ENCODE measurements at regions of chr3 and their contacts with region 1.

Region 1: DNA sequence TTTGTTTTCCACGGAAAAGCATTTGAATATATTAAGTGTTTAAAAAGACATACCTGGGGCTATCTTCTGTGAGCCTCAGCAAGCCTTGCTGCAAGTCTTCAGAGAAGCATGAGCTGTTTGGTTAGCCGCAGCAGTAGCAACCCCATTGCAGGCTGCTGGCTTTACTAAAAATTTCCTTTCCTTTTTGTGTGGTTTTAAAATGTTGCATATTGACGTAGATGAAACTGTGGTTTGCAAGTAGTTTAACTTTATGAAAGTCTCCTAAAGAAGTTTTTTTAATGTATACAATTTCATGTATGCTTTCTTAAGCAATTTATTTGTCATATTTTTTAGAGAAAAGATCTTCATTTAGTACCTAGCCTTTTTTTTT is at the start of gene GPR171:
- DNase-seq: peak; percentile 70
- H3K4me3 Mint-ChIP-seq: peak within 1 kb of the TSS; percentile 91
- H3K27ac Mint-ChIP-seq: peak within 1 kb of the TSS; percentile 95
- H3K4me1 Mint-ChIP-seq: peaks cover 52% of the 10 kb centered on the region
- H3K27me3 Mint-ChIP-seq: no peaks in the 10 kb centered on the region
- total RNA-seq, gene GPR171: 232 TPM in 2 replicates

Region 2: DNA sequence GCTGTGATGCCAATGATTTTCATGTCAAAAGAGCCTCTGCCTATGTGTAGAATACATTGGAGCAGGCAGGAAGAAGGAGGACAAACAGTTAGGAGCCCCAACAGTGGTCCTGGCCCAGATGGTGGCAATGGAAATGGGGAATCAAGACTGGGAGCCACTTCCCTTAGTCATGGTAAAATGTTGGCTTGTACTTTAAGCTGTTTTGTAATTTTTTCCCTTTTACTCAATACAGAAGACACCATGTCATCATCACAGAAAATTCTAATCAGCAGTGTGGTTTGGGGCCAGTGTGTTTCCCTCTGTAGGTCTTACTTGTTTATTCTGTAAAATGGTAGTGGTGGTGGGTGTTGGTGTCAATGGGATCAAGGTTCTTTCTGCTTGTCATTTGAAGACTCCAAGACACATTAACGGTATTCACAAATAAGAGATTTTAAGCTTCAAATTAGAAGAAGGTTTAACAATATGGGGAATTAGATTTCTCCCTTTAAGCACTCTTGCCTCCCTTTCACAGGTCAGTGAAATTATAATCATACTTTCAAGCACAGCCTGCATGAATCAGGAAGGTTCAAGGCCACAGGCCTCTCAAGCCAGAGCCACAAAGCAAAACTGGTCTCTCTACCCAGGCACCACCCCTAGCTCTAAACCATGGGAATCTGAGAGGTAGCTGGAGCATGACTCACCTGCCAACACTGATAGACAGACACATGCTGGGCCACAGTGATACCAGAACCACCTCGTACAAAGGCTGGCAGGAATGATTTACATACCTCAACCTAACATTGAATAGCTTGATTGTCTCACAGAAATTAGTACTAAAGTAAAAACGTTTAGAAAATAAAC is 464.9 kb before region 1 on chr3:
- intact Hi-C with region 1: loop called (anchors 2 kb)
- DNase-seq: no peak
- H3K4me3 Mint-ChIP-seq: peak overlapping the region; percentile 53
- H3K27ac Mint-ChIP-seq: peak overlapping the region; percentile 100
- H3K4me1 Mint-ChIP-seq: peaks cover 91% of the 10 kb centered on the region
- H3K27me3 Mint-ChIP-seq: no peaks in the 10 kb centered on the region

Region 3: GRCh38 chr3:151168269-151169094 is 34.6 kb before region 1 on chr3:
- intact Hi-C with region 1: loop called (anchors 1 kb)
- DNase-seq: peak; percentile 61
- H3K4me3 Mint-ChIP-seq: no peak overlapping the region
- H3K27ac Mint-ChIP-seq: no peak overlapping the region
- H3K4me1 Mint-ChIP-seq: peaks cover 43% of the 10 kb centered on the region
- H3K27me3 Mint-ChIP-seq: no peaks in the 10 kb centered on the region

Region 4: GRCh38 chr3:151183265-151183671 is 19.8 kb before region 1 on chr3:
- intact Hi-C with region 1: no loop called
- DNase-seq: no peak
- H3K4me3 Mint-ChIP-seq: peak overlapping the region; percentile 57
- H3K27ac Mint-ChIP-seq: peak overlapping the region; percentile 73
- H3K4me1 Mint-ChIP-seq: peaks cover 41% of the 10 kb centered on the region
- H3K27me3 Mint-ChIP-seq: no peaks in the 10 kb centered on the region

Region 5: DNA sequence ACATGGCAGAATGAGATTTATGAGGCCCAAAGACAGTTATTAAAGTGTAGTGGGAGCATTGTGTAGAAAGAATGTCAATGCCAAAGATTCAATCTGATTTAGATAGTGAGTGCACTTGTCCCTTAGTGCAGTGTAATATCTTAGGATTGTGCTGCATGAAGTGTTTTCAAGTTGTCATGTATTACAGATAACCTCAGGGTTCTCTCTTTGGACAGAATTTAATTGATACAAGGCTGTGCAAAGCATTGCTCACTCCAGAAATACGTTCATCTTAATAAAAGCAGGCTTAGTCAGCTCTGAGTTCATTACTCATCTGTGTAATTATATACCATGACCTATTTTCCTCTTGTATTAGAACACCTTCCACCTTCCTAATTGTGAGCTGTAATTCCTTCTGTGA is 16.0 kb after region 1 on chr3:
- intact Hi-C with region 1: loop called (anchors 1 kb)
- DNase-seq: no peak
- H3K4me3 Mint-ChIP-seq: no peak overlapping the region
- H3K27ac Mint-ChIP-seq: no peak overlapping the region
- H3K4me1 Mint-ChIP-seq: peaks cover 14% of the 10 kb centered on the region
- H3K27me3 Mint-ChIP-seq: no peaks in the 10 kb centered on the region

Region 6: GRCh38 chr3:151282921-151283320 is 79.9 kb after region 1 on chr3:
- intact Hi-C with region 1: loop called (anchors 1 kb)
- DNase-seq: no peak
- H3K4me3 Mint-ChIP-seq: no peak overlapping the region
- H3K27ac Mint-ChIP-seq: peak overlapping the region; percentile 19
- H3K4me1 Mint-ChIP-seq: peaks cover 47% of the 10 kb centered on the region
- H3K27me3 Mint-ChIP-seq: no peaks in the 10 kb centered on the region

Region 7: GRCh38 chr3:152258448-152259393 is 1055.7 kb after region 1 on chr3:
- intact Hi-C with region 1: loop called (anchors 5 kb)
- DNase-seq: peak; percentile 49
- H3K4me3 Mint-ChIP-seq: peak overlapping the region; percentile 74
- H3K27ac Mint-ChIP-seq: peak overlapping the region; percentile 97
- H3K4me1 Mint-ChIP-seq: peaks cover 78% of the 10 kb centered on the region
- H3K27me3 Mint-ChIP-seq: no peaks in the 10 kb centered on the region